Dendritic cell treated with granulocyte-macrophage colony-stimulating factor and Interleukin-4, amounts not matched to agents 40 ng/mL and 50 ng/mL, for 4 days (primary cell): ENCODE measurements at regions of chr18 and their contacts with region 1.

Region 1: DNA sequence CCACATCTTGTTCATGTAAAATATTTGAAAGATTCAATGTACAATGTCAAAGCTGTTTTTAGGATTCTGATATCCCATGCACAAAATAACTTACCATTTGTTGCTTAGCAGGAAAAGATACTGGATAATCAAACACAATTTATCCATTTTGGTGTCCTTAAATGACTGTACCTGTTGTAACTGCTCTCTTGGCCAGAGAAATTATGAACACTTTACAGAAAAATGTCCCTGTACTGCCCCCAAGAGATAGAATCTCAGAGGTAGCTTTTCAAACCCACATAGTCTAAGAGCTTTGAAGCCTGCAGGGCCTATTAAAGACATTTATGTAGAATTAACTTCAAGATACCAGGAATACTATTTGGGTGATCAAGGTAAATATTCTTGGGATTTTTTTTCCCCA is 12.2 kb upstream of the ME2 start:
- H3K4me3 Mint-ChIP-seq: no peak overlapping the region
- H3K27ac Mint-ChIP-seq: no peak overlapping the region
- H3K4me1 Mint-ChIP-seq: peaks cover 14% of the 10 kb centered on the region
- H3K27me3 Mint-ChIP-seq: no peaks in the 10 kb centered on the region

Region 2: DNA sequence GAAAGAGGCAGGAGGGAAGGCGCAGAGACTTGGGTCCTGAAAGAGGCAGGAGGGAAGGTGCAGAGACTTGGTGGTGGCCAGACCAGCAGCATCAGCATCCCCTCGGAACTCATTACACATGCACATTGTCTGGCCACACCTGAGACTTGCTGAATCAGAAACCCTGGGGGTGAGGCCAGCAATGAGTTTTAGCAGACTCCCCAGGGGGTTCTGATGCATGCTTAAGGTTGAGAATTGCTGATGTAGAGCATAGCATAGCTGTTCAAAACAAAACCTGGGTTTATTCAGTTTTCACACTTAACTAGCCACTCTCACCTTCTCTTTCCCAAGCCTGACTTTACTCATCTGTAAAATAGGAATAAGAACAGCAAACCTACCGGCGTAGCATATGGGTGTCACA is 169.8 kb before region 1 on chr18:
- intact Hi-C with region 1: no loop called
- H3K4me3 Mint-ChIP-seq: no peak overlapping the region
- H3K27ac Mint-ChIP-seq: no peak overlapping the region
- H3K4me1 Mint-ChIP-seq: no peaks in the 10 kb centered on the region
- H3K27me3 Mint-ChIP-seq: peaks cover 1% of the 10 kb centered on the region

Region 3: GRCh38 chr18:50819728-50820378 is 46.9 kb before region 1 on chr18 and contains the start of gene MRO:
- intact Hi-C with region 1: loop called (anchors 1 kb)
- H3K4me3 Mint-ChIP-seq: no peak within 1 kb of the TSS
- H3K27ac Mint-ChIP-seq: no peak within 1 kb of the TSS
- H3K4me1 Mint-ChIP-seq: no peaks in the 10 kb centered on the region
- H3K27me3 Mint-ChIP-seq: peaks cover 5% of the 10 kb centered on the region

Region 4: GRCh38 chr18:50928551-50928950 is 61.8 kb after region 1 on chr18:
- intact Hi-C with region 1: no loop called
- H3K4me3 Mint-ChIP-seq: no peak overlapping the region
- H3K27ac Mint-ChIP-seq: no peak overlapping the region
- H3K4me1 Mint-ChIP-seq: no peaks in the 10 kb centered on the region
- H3K27me3 Mint-ChIP-seq: no peaks in the 10 kb centered on the region